ENCODE measurements at regions of chrX and their contacts with region 1.

Region 1: GRCh38 chrX:25442499-25442898 is 426.7 kb upstream of the ARX start:
- DNase-seq: peak; percentile 16
- H3K4me3 Mint-ChIP-seq: no peak overlapping the region
- H3K27ac Mint-ChIP-seq: no peak overlapping the region
- H3K4me1 Mint-ChIP-seq: no peaks in the 10 kb centered on the region
- H3K27me3 Mint-ChIP-seq: no peaks in the 10 kb centered on the region
- CTCF ChIP-seq: no peak

Region 2: DNA sequence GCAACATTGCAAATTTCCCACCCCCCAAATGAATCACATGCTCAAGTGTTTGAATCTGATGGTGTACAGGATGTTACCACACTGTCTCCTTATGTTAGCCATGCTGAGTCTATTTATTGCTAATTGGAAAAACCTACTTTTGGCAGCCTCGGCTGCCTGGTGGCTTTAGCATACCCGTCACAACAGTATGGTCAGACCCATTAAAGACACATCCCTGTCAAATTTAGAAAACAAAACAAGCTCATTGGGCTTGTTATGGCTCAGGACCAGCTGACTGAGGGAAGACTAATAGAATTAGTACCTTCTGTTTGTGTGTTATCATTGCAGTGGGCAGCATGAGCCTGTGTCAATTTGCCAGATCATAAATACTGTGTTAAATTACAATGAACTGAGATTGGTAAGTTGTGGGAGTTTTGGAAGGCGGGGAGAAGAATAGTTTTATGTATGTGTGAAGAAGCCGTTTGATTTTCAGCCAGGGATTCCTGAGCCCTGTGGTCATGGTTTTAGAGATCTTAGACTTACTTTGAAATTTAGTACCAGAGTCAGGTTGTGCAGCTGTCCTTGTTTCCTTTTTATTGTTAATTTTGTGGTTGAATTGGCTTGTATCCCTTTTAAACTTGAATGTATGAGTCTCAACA is 682.0 kb before region 1 on chrX:
- CTCF ChIA-PET with region 1: no interaction called
- POLR2A ChIA-PET with region 1: no interaction called
- intact Hi-C with region 1: loop called (anchors 10 kb)
- DNase-seq: no peak
- H3K4me3 Mint-ChIP-seq: no peak overlapping the region
- H3K27ac Mint-ChIP-seq: no peak overlapping the region
- H3K4me1 Mint-ChIP-seq: no peaks in the 10 kb centered on the region
- H3K27me3 Mint-ChIP-seq: peaks cover 58% of the 10 kb centered on the region
- CTCF ChIP-seq: no peak

Region 3: GRCh38 chrX:24838629-24839028 is 603.9 kb before region 1 on chrX:
- CTCF ChIA-PET with region 1: interaction called, 10 read pairs
- POLR2A ChIA-PET with region 1: no interaction called
- intact Hi-C with region 1: no loop called
- DNase-seq: peak; percentile 49
- H3K4me3 Mint-ChIP-seq: no peak overlapping the region
- H3K27ac Mint-ChIP-seq: no peak overlapping the region
- H3K4me1 Mint-ChIP-seq: no peaks in the 10 kb centered on the region
- H3K27me3 Mint-ChIP-seq: no peaks in the 10 kb centered on the region
- CTCF ChIP-seq: peak; percentile 51

Region 4: GRCh38 chrX:25012793-25013631 is 429.5 kb before region 1 on chrX:
- CTCF ChIA-PET with region 1: no interaction called
- POLR2A ChIA-PET with region 1: no interaction called
- intact Hi-C with region 1: no loop called
- DNase-seq: no peak
- H3K4me3 Mint-ChIP-seq: peak overlapping the region; percentile 65
- H3K27ac Mint-ChIP-seq: no peak overlapping the region
- H3K4me1 Mint-ChIP-seq: no peaks in the 10 kb centered on the region
- H3K27me3 Mint-ChIP-seq: peaks cover 31% of the 10 kb centered on the region
- CTCF ChIP-seq: no peak

Region 5: DNA sequence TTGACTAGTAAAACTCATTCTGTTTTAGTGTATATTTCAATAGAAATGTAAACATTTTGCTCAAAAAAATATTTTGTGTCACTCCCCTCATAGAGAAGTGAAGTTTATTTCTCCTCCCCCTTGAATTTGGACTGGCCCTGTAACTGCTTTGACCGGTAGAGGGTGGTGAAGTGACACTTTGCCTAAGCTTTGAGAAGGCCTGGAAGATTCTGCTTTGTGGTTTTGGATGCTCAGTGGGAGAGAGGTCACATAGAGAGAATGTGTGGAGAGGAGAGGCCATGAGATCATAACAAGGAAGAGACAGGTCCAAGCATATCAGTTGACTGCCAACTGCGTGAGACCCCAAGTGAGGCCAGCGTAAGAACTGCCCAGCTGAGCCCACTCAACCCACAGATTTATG is 407.6 kb before region 1 on chrX:
- CTCF ChIA-PET with region 1: no interaction called
- POLR2A ChIA-PET with region 1: no interaction called
- intact Hi-C with region 1: loop called (anchors 10 kb)
- DNase-seq: peak; percentile 39
- H3K4me3 Mint-ChIP-seq: no peak overlapping the region
- H3K27ac Mint-ChIP-seq: no peak overlapping the region
- H3K4me1 Mint-ChIP-seq: no peaks in the 10 kb centered on the region
- H3K27me3 Mint-ChIP-seq: no peaks in the 10 kb centered on the region
- CTCF ChIP-seq: peak; percentile 20

Region 6: GRCh38 chrX:25206778-25207177 is 235.7 kb before region 1 on chrX:
- CTCF ChIA-PET with region 1: interaction called, 3 read pairs
- POLR2A ChIA-PET with region 1: no interaction called
- intact Hi-C with region 1: loop called (anchors 1 kb)
- DNase-seq: peak; percentile 77
- H3K4me3 Mint-ChIP-seq: no peak overlapping the region
- H3K27ac Mint-ChIP-seq: no peak overlapping the region
- H3K4me1 Mint-ChIP-seq: no peaks in the 10 kb centered on the region
- H3K27me3 Mint-ChIP-seq: no peaks in the 10 kb centered on the region
- CTCF ChIP-seq: no peak

Region 7: DNA sequence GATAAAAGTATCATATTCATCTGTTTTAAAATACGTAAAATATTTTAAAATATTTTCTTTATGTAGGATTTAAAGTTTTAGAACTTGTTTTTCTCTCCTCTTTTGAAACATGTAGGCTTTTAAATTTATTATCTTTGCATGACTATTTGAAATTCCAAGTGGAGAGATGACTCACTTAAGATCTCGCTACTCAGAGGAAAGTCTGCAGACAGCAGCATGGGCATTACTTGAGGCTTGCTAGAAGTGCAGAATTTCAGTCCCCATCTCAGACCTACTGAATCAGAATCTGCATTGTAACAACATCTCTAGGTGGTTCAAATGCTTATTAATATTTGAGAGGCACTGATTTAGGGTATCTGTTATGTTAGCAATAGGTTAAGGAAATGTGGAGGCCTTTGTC is 201.0 kb before region 1 on chrX:
- CTCF ChIA-PET with region 1: interaction called, 4 read pairs
- POLR2A ChIA-PET with region 1: interaction called, 3 read pairs
- intact Hi-C with region 1: loop called (anchors 1 kb)
- DNase-seq: peak; percentile 1
- H3K4me3 Mint-ChIP-seq: no peak overlapping the region
- H3K27ac Mint-ChIP-seq: no peak overlapping the region
- H3K4me1 Mint-ChIP-seq: no peaks in the 10 kb centered on the region
- H3K27me3 Mint-ChIP-seq: no peaks in the 10 kb centered on the region
- CTCF ChIP-seq: no peak

Region 8: DNA sequence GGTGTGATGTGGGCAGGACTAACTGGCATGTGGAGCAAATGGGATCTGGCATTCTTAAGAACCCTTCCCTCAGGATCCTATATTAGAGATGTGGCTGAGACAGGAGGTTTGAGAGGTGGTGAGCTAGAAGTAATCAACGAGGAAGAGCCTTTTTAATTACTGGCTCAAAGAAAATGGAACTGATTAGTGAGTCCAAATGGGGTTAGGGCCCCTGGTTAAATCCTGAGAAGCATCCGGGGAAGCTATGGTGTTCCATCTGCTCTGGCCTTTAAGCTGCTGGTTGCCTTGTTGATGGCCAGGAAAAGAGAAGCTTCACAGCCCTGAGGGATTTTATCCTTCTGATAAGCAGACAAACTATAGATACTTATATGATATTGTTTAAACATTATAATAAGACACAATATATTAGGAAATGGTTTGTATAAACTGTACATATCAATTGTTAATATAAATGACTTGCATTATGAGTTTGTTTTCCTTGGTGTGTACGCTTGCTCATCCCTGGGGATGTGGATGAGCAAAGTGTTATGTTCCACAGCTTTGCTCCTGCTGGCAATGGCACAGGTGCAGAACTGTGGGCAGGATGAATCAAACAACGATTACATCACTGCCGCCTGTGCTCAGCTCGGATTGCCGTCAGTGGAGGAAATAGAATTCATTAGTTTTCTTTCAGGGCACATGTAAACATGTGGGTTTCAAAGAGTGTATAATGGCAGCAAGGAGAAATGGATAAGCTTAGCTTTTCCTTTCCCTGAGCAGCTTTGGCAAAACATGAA is 98.2 kb before region 1 on chrX:
- CTCF ChIA-PET with region 1: interaction called, 5 read pairs
- POLR2A ChIA-PET with region 1: no interaction called
- intact Hi-C with region 1: loop called (anchors 10 kb)
- DNase-seq: peak; percentile 54
- H3K4me3 Mint-ChIP-seq: no peak overlapping the region
- H3K27ac Mint-ChIP-seq: no peak overlapping the region
- H3K4me1 Mint-ChIP-seq: peaks cover 4% of the 10 kb centered on the region
- H3K27me3 Mint-ChIP-seq: no peaks in the 10 kb centered on the region
- CTCF ChIP-seq: no peak

Region 9: GRCh38 chrX:26050099-26050498 is 607.6 kb after region 1 on chrX:
- CTCF ChIA-PET with region 1: no interaction called
- POLR2A ChIA-PET with region 1: no interaction called
- intact Hi-C with region 1: no loop called
- DNase-seq: peak; percentile 0
- H3K4me3 Mint-ChIP-seq: no peak overlapping the region
- H3K27ac Mint-ChIP-seq: no peak overlapping the region
- H3K4me1 Mint-ChIP-seq: no peaks in the 10 kb centered on the region
- H3K27me3 Mint-ChIP-seq: no peaks in the 10 kb centered on the region
- CTCF ChIP-seq: no peak